ENCODE measurements at regions of chr5 and their contacts with region 1.

Region 1: GRCh38 chr5:135551593-135552447 is 16.1 kb upstream of the NEUROG1 start:
- DNase-seq: peak; percentile 72 to 75
- ATAC-seq: peak; percentile 61 to 90
- H3K4me3 ChIP-seq: no peak overlapping the region
- H3K27ac ChIP-seq: no peak overlapping the region
- H3K4me1 ChIP-seq: no peaks in the 10 kb centered on the region
- CTCF ChIP-seq: peak; percentile 88
- EP300 ChIP-seq: no peak
- POLR2A ChIP-seq: no peak
- RAD21 ChIP-seq: peak; percentile 85 to 89

Region 2: GRCh38 chr5:135482381-135482933 is 69.4 kb before region 1 on chr5:
- CTCF ChIA-PET with region 1: interaction called, 1,932 read pairs
- POLR2A ChIA-PET with region 1: no interaction called
- DNase-seq: no peak
- ATAC-seq: no peak
- H3K4me3 ChIP-seq: no peak overlapping the region
- H3K27ac ChIP-seq: no peak overlapping the region
- H3K4me1 ChIP-seq: no peaks in the 10 kb centered on the region
- CTCF ChIP-seq: no peak
- EP300 ChIP-seq: no peak
- POLR2A ChIP-seq: no peak
- RAD21 ChIP-seq: no peak

Region 3: GRCh38 chr5:135488727-135489465 is 62.9 kb before region 1 on chr5:
- CTCF ChIA-PET with region 1: interaction called, 60 read pairs
- POLR2A ChIA-PET with region 1: no interaction called
- DNase-seq: peak; percentile 53 to 68
- ATAC-seq: peak; percentile 75 to 85
- H3K4me3 ChIP-seq: peak overlapping the region; percentile 38
- H3K27ac ChIP-seq: peak overlapping the region; percentile 37 to 83
- H3K4me1 ChIP-seq: peaks cover 27% of the 10 kb centered on the region
- CTCF ChIP-seq: no peak
- EP300 ChIP-seq: no peak
- POLR2A ChIP-seq: no peak
- RAD21 ChIP-seq: no peak

Region 4: DNA sequence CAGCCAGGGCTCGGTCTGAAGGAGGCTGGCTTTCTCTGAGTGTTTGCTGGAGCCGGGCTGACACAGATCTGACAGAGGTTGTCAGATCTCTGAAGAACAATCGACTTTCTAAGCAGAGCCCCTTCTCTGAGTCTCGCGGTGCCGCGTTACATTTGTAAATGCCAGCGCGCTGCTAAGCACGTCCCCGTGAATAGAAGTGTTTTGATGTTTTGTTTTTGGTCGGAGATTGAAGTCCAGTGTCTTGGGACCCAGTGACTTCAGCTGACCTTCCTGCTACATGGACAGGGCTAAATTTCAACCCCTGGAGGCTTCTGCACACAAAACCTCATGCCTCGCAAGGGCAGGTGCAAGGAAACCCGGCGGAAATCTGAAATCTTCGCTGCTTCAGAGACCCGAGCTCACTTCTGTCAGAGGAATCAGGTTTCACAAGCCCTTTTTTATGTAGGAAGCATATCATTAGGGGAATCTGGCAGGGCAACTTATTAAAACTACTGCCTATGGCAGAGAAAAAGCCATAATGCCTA is 43.3 kb before region 1 on chr5:
- CTCF ChIA-PET with region 1: interaction called, 11 read pairs
- POLR2A ChIA-PET with region 1: no interaction called
- DNase-seq: no peak
- ATAC-seq: no peak
- H3K4me3 ChIP-seq: no peak overlapping the region
- H3K27ac ChIP-seq: no peak overlapping the region
- H3K4me1 ChIP-seq: peaks cover 5% of the 10 kb centered on the region; the same call in 1 of the 3 replicates
- CTCF ChIP-seq: no peak
- EP300 ChIP-seq: no peak
- POLR2A ChIP-seq: no peak
- RAD21 ChIP-seq: no peak

Region 5: DNA sequence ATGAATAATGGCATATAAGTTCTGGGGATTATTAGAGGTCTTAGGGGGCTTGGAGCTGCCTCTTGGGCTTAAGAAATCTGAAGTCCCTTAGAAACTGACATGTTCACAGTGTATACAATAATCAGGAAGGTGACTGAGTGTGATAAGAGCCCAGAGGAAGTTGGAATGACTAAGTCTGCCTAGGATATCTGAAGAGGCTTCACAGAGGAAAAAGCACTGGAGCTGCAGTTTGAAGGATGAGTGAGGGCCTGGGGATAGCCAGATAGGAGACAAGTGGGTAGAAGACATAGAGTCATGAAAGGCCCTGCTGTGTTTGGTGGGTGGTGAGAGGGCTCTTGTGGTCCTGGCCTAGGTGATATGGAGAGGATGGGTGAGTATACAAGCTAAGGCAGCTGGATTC is 24.9 kb before region 1 on chr5:
- CTCF ChIA-PET with region 1: interaction called, 75 read pairs
- POLR2A ChIA-PET with region 1: no interaction called
- DNase-seq: no peak
- ATAC-seq: no peak
- H3K4me3 ChIP-seq: no peak overlapping the region
- H3K27ac ChIP-seq: no peak overlapping the region
- H3K4me1 ChIP-seq: no peaks in the 10 kb centered on the region
- CTCF ChIP-seq: no peak
- EP300 ChIP-seq: no peak
- POLR2A ChIP-seq: no peak
- RAD21 ChIP-seq: no peak

Region 6: GRCh38 chr5:135535820-135536801 is 15.7 kb before region 1 on chr5 and contains the start of gene NEUROG1:
- CTCF ChIA-PET with region 1: interaction called, 75 read pairs
- POLR2A ChIA-PET with region 1: no interaction called
- DNase-seq: no peak
- ATAC-seq: no peak
- H3K4me3 ChIP-seq: peak within 1 kb of the TSS; percentile 27
- H3K27ac ChIP-seq: no peak within 1 kb of the TSS
- H3K4me1 ChIP-seq: peaks cover 7% of the 10 kb centered on the region; the same call in 1 of the 3 replicates
- CTCF ChIP-seq: no peak
- EP300 ChIP-seq: no peak
- POLR2A ChIP-seq: no peak
- RAD21 ChIP-seq: no peak
- polyA plus RNA-seq, gene NEUROG1: not detected in 2 replicates

Region 7: GRCh38 chr5:135829681-135830383 is 278.0 kb after region 1 on chr5:
- CTCF ChIA-PET with region 1: interaction called, 49 read pairs
- POLR2A ChIA-PET with region 1: no interaction called
- DNase-seq: peak; percentile 56 to 79
- ATAC-seq: peak; percentile 28 to 64; a peak in 4 of 6 replicates
- H3K4me3 ChIP-seq: no peak overlapping the region
- H3K27ac ChIP-seq: no peak overlapping the region
- H3K4me1 ChIP-seq: 0 out of 3 replicates have a peak, but pooled peaks cover under 1% of the 10 kb centered on the region
- CTCF ChIP-seq: peak; percentile 86
- EP300 ChIP-seq: no peak
- POLR2A ChIP-seq: no peak
- RAD21 ChIP-seq: peak; percentile 83

Region 8: DNA sequence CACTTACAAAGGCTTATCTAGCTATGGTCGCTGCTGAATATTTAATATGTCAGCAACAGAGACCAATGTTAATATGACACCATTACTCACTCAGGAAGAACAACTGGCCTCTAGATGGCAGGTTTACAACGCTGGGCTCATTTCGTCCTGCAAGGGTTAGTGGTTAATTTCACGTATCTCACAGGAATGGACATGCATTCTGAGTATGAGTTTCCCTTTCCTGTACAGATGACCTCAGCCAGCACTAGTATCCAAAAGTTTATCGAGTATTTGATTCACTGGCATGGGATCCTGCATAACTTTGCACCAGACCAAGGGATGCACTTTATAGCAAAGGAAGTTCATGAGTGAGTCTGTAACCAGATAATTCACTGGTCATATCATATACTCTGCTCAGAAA is 822.2 kb after region 1 on chr5:
- CTCF ChIA-PET with region 1: no interaction called
- POLR2A ChIA-PET with region 1: no interaction called
- DNase-seq: peak in 1 of 2 experiments; percentile 30
- ATAC-seq: peak; percentile 56 to 75; a peak in 4 of 6 replicates
- H3K4me3 ChIP-seq: no peak overlapping the region
- H3K27ac ChIP-seq: no peak overlapping the region
- H3K4me1 ChIP-seq: no peaks in the 10 kb centered on the region
- CTCF ChIP-seq: peak; percentile 37
- EP300 ChIP-seq: no peak
- POLR2A ChIP-seq: no peak
- RAD21 ChIP-seq: peak; percentile 34 to 65; a peak in 4 of 5 replicates

Measured in A549 (cell line).